ENCODE measurements at regions of chr14 and their contacts with region 1.

Region 1: DNA sequence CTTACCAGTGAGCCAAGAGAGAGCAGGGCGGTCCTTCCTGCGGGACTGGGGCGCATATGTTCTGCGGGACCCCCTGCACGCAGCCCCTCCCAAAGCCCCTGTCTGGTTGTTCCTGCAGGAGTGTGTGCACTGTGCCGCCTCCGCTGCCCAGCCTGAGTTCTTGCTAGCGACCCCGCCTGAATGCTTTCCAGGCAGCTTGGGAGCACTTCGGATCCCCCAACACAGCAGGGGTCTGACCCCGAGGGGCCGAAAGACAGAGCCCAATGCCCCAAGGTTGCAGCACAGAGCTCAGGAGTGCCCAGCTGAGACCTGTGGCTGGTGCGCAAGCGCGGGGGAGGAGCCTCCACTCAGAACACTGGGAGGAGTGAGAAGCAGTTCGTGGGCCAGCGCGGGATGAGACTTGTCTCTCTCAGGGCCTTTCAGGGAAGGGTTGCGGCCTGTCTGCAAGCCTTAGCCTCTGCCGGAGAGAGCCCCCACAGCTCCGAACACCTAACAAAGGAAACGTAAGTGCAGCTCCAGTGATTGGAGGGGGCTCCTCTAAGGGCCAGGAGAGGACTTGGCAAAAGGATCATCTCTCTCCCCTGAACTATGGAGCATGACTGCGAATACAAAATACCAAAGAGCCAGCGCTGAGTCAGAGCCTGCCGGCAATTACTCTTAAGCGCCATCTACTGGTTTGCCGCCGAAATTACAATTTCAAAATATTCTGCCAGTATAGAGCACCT is 50.5 kb downstream of the GTF2A1 start:
- DNase-seq: peak; percentile 92
- H3K4me3 ChIP-seq: peak overlapping the region; percentile 33 to 72 (median 50)
- H3K27ac ChIP-seq: peak overlapping the region; percentile 77
- H3K4me1 ChIP-seq: peaks cover 12% of the 10 kb centered on the region
- H3K27me3 ChIP-seq: no peaks in the 10 kb centered on the region
- CTCF ChIP-seq: peak; percentile 76 to 88
- POLR2A ChIP-seq: peak; percentile 87

Region 2: GRCh38 chr14:80055667-80056496 is 1114.4 kb before region 1 on chr14:
- CTCF ChIA-PET with region 1: interaction called, 7 read pairs
- POLR2A ChIA-PET with region 1: no interaction called
- dilution Hi-C with region 1: no loop called
- intact Hi-C with region 1: loop called (anchors 1 kb)
- DNase-seq: peak; percentile 47
- H3K4me3 ChIP-seq: no peak overlapping the region
- H3K27ac ChIP-seq: no peak overlapping the region
- H3K4me1 ChIP-seq: no peaks in the 10 kb centered on the region
- H3K27me3 ChIP-seq: no peaks in the 10 kb centered on the region
- CTCF ChIP-seq: peak; percentile 46 to 61
- POLR2A ChIP-seq: no peak

Region 3: GRCh38 chr14:80941241-80942182 is 228.8 kb before region 1 on chr14 and contains the start of gene CEP128:
- CTCF ChIA-PET with region 1: no interaction called
- POLR2A ChIA-PET with region 1: interaction called, 4 read pairs
- dilution Hi-C with region 1: no loop called
- intact Hi-C with region 1: loop called (anchors 1 kb)
- DNase-seq: peak; percentile 98
- H3K4me3 ChIP-seq: peak within 1 kb of the TSS; percentile 25 to 75 (median 74)
- H3K27ac ChIP-seq: peak within 1 kb of the TSS; percentile 26
- H3K4me1 ChIP-seq: peaks cover 7% of the 10 kb centered on the region
- H3K27me3 ChIP-seq: no peaks in the 10 kb centered on the region
- CTCF ChIP-seq: no peak
- POLR2A ChIP-seq: no peak
- total RNA-seq, gene CEP128: 22.9 and 23.7 TPM in 2 replicates

Region 4: DNA sequence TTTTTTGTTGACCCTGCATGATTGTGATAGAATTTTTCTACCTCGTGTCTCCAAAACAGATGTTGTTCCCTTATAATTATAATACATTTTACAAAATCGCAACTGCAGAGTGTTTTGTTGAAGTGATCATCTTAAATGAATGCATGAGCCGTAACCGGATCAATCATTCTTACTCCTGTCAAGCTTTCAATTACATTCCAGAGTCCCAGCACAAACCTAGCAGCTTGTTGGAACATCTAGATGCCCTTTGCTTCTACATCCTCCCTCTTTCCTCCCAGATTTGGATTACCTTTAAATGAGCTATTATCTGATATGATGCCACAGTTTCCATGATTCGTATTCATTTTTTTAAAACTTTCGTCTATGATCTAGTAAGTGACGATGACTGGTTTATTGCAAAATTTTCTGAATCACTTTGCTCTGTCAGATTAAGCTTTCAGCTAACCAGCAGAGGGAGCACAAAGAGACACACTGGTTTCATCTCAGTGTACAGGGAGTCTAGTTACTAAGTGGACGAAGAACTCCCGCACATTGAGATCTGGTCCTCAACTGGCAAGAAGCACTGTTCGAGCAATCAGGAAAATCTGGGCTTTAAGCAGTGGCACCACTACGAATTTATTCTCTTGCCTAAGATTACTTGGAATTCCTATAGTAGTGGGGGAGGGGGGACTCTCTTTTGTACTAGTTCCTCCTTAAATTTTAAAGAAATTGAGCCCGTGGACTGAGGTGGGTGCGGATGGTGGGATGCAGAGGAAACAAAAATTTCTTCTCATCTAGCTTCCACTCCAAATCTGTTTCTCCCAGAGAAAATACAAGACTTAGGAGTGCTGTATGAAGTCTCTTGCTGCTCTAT is 174.0 kb before region 1 on chr14:
- CTCF ChIA-PET with region 1: interaction called, 36 read pairs
- POLR2A ChIA-PET with region 1: interaction called, 4 read pairs
- dilution Hi-C with region 1: no loop called
- intact Hi-C with region 1: loop called (anchors 1 kb)
- DNase-seq: peak; percentile 44
- H3K4me3 ChIP-seq: no peak overlapping the region
- H3K27ac ChIP-seq: no peak overlapping the region
- H3K4me1 ChIP-seq: no peaks in the 10 kb centered on the region
- H3K27me3 ChIP-seq: no peaks in the 10 kb centered on the region
- CTCF ChIP-seq: peak; percentile 23 to 46
- POLR2A ChIP-seq: no peak

Region 5: GRCh38 chr14:81220830-81221578 is 50.7 kb after region 1 on chr14 and contains the start of gene GTF2A1:
- CTCF ChIA-PET with region 1: interaction called, 7 read pairs
- POLR2A ChIA-PET with region 1: interaction called, 16 read pairs
- dilution Hi-C with region 1: no loop called
- intact Hi-C with region 1: loop called (anchors 1 kb)
- DNase-seq: peak; percentile 97
- H3K4me3 ChIP-seq: peak within 1 kb of the TSS; percentile 84 to 99 (median 98)
- H3K27ac ChIP-seq: peak within 1 kb of the TSS; percentile 96
- H3K4me1 ChIP-seq: peaks cover 18% of the 10 kb centered on the region
- H3K27me3 ChIP-seq: no peaks in the 10 kb centered on the region
- CTCF ChIP-seq: no peak
- POLR2A ChIP-seq: peak; percentile 99
- total RNA-seq, gene GTF2A1: 32.1 and 33.4 TPM in 2 replicates

Region 6: GRCh38 chr14:81234278-81234677 is 64.0 kb after region 1 on chr14:
- CTCF ChIA-PET with region 1: no interaction called
- POLR2A ChIA-PET with region 1: no interaction called
- dilution Hi-C with region 1: no loop called
- intact Hi-C with region 1: no loop called
- DNase-seq: no peak
- H3K4me3 ChIP-seq: no peak overlapping the region
- H3K27ac ChIP-seq: no peak overlapping the region
- H3K4me1 ChIP-seq: no peaks in the 10 kb centered on the region
- H3K27me3 ChIP-seq: no peaks in the 10 kb centered on the region
- CTCF ChIP-seq: no peak
- POLR2A ChIP-seq: no peak